K562 (cell line): ENCODE measurements at regions of chr1 and their contacts with region 1.

Region 1: DNA sequence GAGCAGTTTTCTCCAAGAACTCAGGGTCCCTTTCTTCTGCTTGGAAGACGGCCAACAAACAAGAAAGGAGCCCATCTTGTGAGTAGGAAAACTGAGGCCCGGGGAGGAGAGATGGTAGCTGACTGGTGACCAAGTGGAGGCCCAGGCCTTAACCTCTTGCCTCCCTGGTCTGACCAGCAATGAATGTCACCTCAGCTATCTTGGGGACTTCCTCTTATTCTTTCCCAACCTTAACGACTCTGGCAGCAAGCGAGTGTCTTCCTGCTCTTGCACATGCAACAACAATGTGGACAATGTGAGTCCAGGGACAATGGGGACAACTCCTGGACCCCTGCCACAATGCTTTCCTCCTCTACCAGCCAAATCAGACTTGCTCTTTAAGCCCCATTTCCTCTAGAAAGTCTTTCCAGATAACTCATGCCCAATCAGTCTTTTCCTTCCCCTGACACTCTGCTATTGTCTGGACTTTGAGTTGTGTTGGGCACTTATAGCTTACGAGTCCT is 12.6 kb downstream of the HSPG2 start:
- DNase-seq: no peak
- ATAC-seq: 0 out of 3 replicates have a peak, but pooled peaks have one; percentile 3
- H3K4me3 ChIP-seq: no peak overlapping the region
- H3K27ac ChIP-seq: peak overlapping the region; percentile 55; the same call in 2 of the 3 replicates
- H3K4me1 ChIP-seq: peaks cover 62 to 70% of the 10 kb centered on the region in 2 experiments
- H3K27me3 ChIP-seq: no peaks in the 10 kb centered on the region
- CTCF ChIP-seq: no peak
- EP300 ChIP-seq: no peak
- POLR2A ChIP-seq: no peak; the same call in 1 of the 2 replicates
- RAD21 ChIP-seq: peak; percentile 9 to 22; a peak in 1 of 4 replicates

Region 2: DNA sequence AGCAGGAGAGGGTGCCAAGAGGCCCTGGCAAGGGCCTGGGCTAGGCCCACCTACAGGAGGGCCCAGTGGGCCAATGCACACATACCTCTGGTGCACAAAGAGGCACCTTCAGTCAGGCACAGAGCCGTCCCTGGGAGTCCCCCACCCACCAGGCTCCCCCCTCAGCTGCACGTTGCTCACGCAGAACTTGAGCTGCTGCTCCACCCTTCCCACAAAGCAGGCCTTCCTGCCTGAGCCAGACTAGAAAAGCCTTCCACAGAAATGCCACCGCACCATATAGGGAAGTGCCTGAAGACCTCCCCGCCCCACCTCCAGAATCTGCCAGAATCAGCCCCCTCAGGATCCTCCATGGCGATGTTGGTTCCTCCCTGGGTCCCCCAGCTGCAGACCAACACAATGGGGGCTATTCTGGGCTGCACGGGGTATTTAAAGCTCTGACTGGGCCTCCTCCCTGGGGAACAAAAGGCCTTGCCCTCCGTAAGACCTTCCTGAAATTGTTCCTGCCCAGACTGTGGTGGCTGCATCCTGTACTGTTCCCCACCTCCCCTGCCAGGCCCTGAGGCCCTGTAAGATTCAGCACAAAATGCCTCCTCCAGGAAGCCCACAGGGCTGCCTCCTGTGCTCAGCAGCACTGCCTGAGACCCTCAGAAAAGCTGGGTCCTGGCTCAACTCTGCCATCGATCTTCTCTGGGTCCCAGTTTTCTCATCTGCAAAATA is 14.6 kb before region 1 on chr1:
- CTCF ChIA-PET with region 1: no interaction called
- POLR2A ChIA-PET with region 1: interaction called, 18 read pairs
- in situ Hi-C with region 1: no loop called
- intact Hi-C with region 1: no loop called
- DNase-seq: peak in 2 of 4 experiments; percentile 27 to 60
- ATAC-seq: no peak
- H3K4me3 ChIP-seq: no peak overlapping the region
- H3K27ac ChIP-seq: peak overlapping the region; percentile 46
- H3K4me1 ChIP-seq: peaks cover 76 to 81% of the 10 kb centered on the region in 2 experiments
- H3K27me3 ChIP-seq: no peaks in the 10 kb centered on the region
- CTCF ChIP-seq: no peak
- EP300 ChIP-seq: no peak
- POLR2A ChIP-seq: no peak
- RAD21 ChIP-seq: no peak

Region 3: GRCh38 chr1:22376001-22376400 is 451.4 kb after region 1 on chr1:
- CTCF ChIA-PET with region 1: no interaction called
- POLR2A ChIA-PET with region 1: no interaction called
- in situ Hi-C with region 1: no loop called
- intact Hi-C with region 1: no loop called
- DNase-seq: no peak
- ATAC-seq: no peak
- H3K4me3 ChIP-seq: no peak overlapping the region
- H3K27ac ChIP-seq: no peak overlapping the region
- H3K4me1 ChIP-seq: peaks cover 0 to 7% of the 10 kb centered on the region in 2 experiments; a peak in 1 of 5 replicates
- H3K27me3 ChIP-seq: peaks cover 25 to 69% of the 10 kb centered on the region in 2 experiments; a peak in 4 of 5 replicates
- CTCF ChIP-seq: no peak
- EP300 ChIP-seq: no peak
- POLR2A ChIP-seq: no peak
- RAD21 ChIP-seq: no peak